Activated CD4-positive, alpha-beta memory T cell treated with anti-CD3 and anti-CD28 coated beads for 36 hours (primary cell): ENCODE measurements at regions of chr2 and their contacts with region 1.

Region 1: DNA sequence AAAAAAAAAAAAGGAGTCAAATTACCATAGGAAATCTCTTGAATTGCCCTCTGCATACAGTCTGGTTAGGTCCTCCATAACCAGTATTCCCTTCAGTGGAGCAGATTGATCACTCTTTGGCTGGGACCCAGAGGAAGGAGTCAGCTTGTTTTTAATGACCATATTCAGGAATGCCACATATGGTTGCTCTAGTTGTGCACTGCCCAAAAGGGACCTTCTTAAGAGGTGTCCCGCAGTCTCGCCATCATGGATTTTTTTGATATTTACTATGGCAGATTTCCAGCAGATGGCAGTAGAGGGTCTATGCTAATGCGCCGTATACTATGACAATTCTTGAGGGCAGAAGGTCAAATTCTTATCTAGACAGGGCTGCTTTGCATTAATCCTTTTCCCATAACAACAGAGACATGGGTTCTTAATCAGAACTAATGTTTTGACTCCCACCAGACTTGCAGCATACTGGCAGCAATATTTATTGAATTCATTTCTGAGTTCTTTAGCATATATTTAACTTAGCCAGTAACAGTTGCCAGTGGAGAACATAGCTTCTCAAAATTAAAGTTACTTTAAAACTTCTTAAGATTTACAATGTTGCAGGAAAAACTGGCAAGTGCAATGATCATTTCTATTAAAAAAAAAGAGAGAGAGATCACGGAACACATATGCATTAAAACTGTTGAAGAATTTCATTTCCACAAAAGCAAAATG is 31.8 kb upstream of the INPP4A start:
- DNase-seq: peak; percentile 61
- H3K4me3 Mint-ChIP-seq: no peak overlapping the region
- H3K27ac Mint-ChIP-seq: no peak overlapping the region
- H3K4me1 Mint-ChIP-seq: peaks cover 8% of the 10 kb centered on the region
- H3K27me3 Mint-ChIP-seq: no peaks in the 10 kb centered on the region

Region 2: GRCh38 chr2:98426771-98427170 is 13.9 kb after region 1 on chr2:
- CTCF ChIA-PET with region 1: interaction called, 21 read pairs
- POLR2A ChIA-PET with region 1: no interaction called
- intact Hi-C with region 1: no loop called
- DNase-seq: no peak
- H3K4me3 Mint-ChIP-seq: no peak overlapping the region
- H3K27ac Mint-ChIP-seq: no peak overlapping the region
- H3K4me1 Mint-ChIP-seq: no peaks in the 10 kb centered on the region
- H3K27me3 Mint-ChIP-seq: no peaks in the 10 kb centered on the region

Region 3: GRCh38 chr2:98465456-98466226 is 52.7 kb after region 1 on chr2:
- CTCF ChIA-PET with region 1: interaction called, 11 read pairs
- POLR2A ChIA-PET with region 1: no interaction called
- intact Hi-C with region 1: no loop called
- DNase-seq: peak; percentile 79
- H3K4me3 Mint-ChIP-seq: peak overlapping the region; percentile 68
- H3K27ac Mint-ChIP-seq: peak overlapping the region; percentile 95
- H3K4me1 Mint-ChIP-seq: peaks cover 85% of the 10 kb centered on the region
- H3K27me3 Mint-ChIP-seq: no peaks in the 10 kb centered on the region

Region 4: DNA sequence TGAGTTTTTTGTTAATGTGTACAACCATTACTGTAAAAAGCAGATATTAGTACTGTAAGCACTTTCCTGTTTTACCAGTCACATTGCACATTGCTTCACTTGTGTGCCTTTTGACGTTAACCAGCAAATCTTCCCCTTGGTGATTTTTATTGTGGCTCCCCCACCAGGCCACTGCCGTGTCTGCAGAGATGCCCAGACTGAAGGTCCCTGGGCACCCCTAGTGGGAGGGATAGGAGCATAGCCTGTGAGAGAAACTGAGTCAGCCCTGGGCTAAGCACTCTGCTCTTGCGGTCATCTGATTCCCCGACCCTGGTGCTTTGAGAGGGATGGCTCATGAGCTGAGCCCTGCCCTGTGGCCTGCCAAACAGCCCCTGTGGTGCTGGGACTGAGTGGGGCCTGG is 105.2 kb after region 1 on chr2:
- CTCF ChIA-PET with region 1: interaction called, 17 read pairs
- POLR2A ChIA-PET with region 1: no interaction called
- intact Hi-C with region 1: loop called (anchors 1 kb)
- DNase-seq: peak; percentile 72
- H3K4me3 Mint-ChIP-seq: no peak overlapping the region
- H3K27ac Mint-ChIP-seq: no peak overlapping the region
- H3K4me1 Mint-ChIP-seq: peaks cover 44% of the 10 kb centered on the region
- H3K27me3 Mint-ChIP-seq: no peaks in the 10 kb centered on the region

Region 5: DNA sequence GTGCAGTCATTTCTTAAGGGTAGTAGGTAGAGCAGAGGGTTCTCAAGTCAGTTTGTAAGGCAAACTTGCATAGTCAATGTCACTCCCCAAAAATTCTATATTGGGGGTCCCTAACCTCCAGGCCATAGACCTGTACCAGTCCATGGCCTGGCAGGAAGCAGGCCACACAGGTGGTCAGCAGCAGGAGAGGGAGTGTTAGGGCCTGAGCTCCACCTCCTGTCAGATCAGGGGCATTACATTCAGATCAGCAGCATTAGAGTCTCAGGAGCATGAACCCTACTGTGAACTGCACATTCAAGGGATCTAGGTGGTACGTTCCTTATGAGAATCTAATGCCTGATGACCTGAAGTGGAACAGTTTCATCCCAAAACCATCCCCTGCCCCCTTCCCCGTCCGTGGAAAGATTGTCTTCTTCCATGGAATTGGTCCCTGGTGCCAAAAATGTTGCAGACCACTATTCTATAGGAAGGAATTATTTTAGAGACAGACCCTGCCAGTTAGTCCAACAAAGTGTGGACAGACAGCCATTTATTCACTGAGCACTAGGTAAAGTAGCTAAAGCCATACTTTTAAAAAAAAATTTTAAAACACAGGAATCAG is 188.7 kb after region 1 on chr2:
- CTCF ChIA-PET with region 1: interaction called, 14 read pairs
- POLR2A ChIA-PET with region 1: no interaction called
- intact Hi-C with region 1: loop called (anchors 1 kb)
- DNase-seq: no peak
- H3K4me3 Mint-ChIP-seq: no peak overlapping the region
- H3K27ac Mint-ChIP-seq: no peak overlapping the region
- H3K4me1 Mint-ChIP-seq: peaks cover 29% of the 10 kb centered on the region
- H3K27me3 Mint-ChIP-seq: no peaks in the 10 kb centered on the region